ENCODE measurements at regions of chr11 and their contacts with region 1.

Region 1: DNA sequence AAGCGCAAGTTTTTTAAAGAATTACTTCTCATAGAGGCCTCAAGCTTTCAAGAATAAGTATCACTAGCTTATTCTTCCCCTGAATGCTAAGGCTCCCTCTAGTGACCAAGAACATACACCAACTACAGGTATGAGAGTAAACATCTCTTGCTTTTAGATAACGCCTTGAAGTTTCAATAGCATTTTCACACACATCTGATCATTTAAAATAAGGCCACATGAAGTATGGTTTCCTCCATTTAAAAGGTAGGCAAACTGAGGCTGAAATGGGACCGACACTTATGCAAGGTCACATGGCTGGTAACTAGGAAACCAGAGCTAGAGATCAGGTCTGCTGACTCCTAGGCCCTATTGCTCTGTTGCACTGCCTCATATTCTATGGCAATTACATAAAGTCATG is 66.5 kb downstream of the CCDC34 start:
- DNase-seq: peak; percentile 43

Region 2: DNA sequence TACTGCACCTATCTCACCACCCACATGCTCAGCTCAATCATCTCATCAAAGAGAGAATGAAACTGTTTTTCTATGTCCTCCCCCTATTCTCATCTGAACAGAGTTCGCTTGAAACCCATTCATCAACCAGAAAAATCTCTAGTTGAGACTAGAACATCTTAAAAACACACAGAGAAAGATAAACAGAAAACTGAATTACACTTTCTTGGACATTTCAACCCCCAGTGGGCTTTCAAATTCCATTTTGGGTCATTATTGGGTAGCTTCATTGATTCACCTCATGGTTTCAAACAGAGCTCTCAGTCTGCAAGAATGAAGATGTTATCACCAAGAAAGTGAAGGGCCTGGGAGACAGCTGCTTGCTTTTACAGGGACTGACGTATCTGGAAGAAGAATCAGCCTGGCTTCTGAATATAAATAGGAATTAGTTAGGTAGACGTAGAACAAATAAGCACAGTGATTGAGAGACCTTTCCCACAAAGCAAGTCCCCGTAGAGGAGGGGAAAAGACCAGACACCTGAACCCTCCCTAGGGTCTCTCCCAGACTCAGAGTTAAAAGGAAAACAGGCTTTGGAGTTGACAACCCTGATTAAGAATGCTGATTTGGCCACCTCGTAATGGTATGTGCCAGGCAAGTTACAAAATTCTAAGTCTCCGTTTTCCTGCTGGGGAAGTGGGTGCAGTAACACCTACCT is 100.1 kb before region 1 on chr11:
- CTCF ChIA-PET with region 1: interaction called, 10 read pairs
- POLR2A ChIA-PET with region 1: no interaction called
- DNase-seq: no peak

Region 3: DNA sequence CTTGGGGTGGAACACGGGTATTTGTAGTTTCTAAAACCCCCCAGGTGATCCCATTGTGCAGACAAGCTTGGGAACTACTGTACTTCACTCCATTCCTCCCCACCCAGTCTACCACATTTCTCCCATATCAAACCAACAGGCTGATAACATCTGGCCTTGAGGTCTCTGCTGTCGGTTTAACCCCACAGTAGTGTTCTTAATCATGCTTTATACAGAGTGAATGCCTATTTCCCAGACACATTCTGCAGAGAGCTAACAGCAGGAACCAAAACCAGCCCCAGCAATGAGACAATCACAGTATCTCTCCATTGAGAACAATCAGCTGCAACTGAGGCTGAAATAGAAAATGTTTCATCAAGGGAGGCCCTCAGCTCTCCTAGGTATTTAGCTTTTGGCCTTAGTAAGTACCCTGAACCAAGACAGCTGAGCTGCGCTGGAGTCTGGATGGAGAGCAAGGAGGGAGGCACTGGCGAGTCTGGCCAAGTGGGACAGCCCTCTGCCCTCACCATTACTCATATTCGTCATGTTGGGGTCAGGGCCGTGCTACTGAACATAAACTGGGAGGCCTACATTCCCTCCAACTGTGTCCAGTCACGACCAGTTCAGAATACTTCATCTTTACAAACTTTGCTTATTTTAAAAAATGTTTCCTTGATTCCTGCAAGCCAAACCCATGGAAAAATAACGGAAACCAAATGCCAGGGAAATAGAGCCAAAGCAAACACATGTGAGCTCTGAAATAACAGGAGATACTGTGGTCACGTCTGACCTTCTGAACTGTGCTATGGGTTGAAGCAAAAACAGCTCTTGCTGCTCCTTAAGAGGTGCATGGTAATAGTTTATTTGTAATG is 14.5 kb before region 1 on chr11:
- CTCF ChIA-PET with region 1: interaction called, 19 read pairs
- POLR2A ChIA-PET with region 1: interaction called, 3 read pairs
- DNase-seq: no peak

Region 4: GRCh38 chr11:27309046-27309445 is 12.5 kb after region 1 on chr11:
- CTCF ChIA-PET with region 1: interaction called, 12 read pairs
- POLR2A ChIA-PET with region 1: no interaction called
- DNase-seq: no peak

Region 5: DNA sequence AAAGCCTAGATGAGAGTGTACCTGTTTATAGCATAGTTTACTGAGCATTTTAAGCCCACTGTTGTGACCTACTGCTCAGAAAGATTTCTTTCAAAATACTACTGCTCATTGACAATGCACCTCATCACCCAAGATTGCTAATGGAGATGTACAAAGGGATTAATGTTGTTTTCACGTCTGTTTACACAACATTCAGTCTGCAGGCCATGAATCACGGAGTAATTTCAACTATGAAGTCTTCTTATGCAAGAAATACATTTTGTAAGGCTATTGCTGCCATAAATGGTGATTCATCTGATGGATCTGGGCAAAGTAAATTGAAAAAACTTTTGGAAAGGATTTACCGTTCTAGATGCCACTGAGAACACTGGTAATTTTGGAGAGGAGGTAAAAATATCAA is 698.6 kb after region 1 on chr11:
- CTCF ChIA-PET with region 1: no interaction called
- POLR2A ChIA-PET with region 1: no interaction called
- DNase-seq: no peak